ENCODE measurements at regions of chr11 and their contacts with region 1.

Region 1: DNA sequence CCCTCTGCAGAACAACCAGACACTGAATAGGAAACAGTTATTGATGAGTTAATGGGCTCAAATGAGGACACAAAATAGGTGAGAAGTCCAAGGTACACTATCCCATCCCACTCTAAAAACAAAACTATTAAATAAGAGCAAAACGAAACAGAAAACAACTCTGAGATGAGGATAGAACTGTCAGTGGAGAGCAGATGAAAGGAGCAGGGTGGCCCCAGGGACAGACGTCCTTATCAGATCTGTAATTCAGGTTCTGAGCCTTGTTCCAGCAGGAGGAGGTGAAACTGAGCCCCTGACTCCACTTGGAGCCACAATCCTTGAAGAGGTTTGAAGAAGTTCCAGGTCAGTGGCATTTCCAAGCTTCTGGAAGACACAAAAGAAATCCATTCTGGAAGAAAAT is 8.5 kb upstream of the SNX19 start:
- ATAC-seq: no peak
- H3K4me3 ChIP-seq: no peak overlapping the region
- H3K27ac ChIP-seq: no peak overlapping the region
- H3K4me1 ChIP-seq: no peaks in the 10 kb centered on the region

Region 2: GRCh38 chr11:131674051-131674755 is 749.4 kb after region 1 on chr11:
- in situ Hi-C with region 1: loop called in 2 of 9 experiments (anchors 10 kb)
- ATAC-seq: peak; percentile 88 to 99 (median 92)
- H3K4me3 ChIP-seq: no peak overlapping the region
- H3K27ac ChIP-seq: no peak overlapping the region
- H3K4me1 ChIP-seq: peaks cover 3 to 10% of the 10 kb centered on the region in 2 donors

Measured in motor neuron (in vitro differentiated cells).